ENCODE measurements at regions of chr22 and their contacts with region 1.

Region 1: GRCh38 chr22:32202539-32203180 is 2.2 kb downstream of the RFPL2 start:
- DNase-seq: peak; percentile 51
- H3K4me3 ChIP-seq: no peak overlapping the region
- H3K27ac ChIP-seq: no peak overlapping the region
- H3K4me1 ChIP-seq: no peaks in the 10 kb centered on the region
- H3K27me3 ChIP-seq: no peaks in the 10 kb centered on the region
- CTCF ChIP-seq: peak; percentile 57 to 75

Region 2: DNA sequence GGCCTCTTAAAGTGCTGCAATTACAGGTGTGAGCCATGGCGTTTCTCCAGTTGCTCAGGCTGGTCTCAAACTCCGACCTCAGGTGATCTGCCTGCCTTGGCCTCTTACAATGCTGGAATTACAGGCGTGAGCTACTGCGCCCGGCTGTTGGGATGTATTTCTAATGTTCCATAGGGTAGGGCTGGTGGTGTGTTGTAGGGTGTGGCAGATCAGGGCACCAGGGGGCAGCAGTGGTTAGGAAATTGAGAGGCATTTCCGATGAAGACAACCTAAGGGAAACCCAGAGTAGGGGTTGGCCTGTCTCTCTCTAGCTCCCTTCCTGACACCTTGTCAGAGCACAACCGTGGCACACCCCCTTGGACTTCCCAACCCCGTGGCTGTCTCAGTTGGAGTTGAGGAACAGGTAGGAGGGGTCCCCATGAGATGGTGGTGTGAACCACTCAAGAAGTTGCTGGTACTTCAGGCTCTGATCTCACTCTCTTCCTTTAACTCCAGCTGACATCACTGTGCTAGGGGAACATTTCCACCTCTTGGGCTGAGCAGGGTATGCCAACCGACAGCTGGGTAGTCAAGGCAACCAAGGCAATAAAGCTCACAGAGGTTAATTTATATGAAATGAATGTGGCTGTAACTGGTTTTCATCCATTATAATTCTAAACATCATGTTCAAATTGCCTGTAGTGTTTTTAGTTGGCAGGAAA is 225.4 kb before region 1 on chr22:
- CTCF ChIA-PET with region 1: no interaction called
- dilution Hi-C with region 1: no loop called
- in situ Hi-C with region 1: no loop called
- intact Hi-C with region 1: loop called (anchors 2 kb)
- DNase-seq: peak; percentile 72
- H3K4me3 ChIP-seq: no peak overlapping the region
- H3K27ac ChIP-seq: no peak overlapping the region
- H3K4me1 ChIP-seq: no peaks in the 10 kb centered on the region
- H3K27me3 ChIP-seq: no peaks in the 10 kb centered on the region
- CTCF ChIP-seq: peak; percentile 78 to 86

Region 3: GRCh38 chr22:32103658-32104315 is 98.9 kb before region 1 on chr22:
- CTCF ChIA-PET with region 1: no interaction called
- dilution Hi-C with region 1: no loop called
- in situ Hi-C with region 1: no loop called
- intact Hi-C with region 1: loop called (anchors 1 kb)
- DNase-seq: no peak
- H3K4me3 ChIP-seq: no peak overlapping the region
- H3K27ac ChIP-seq: no peak overlapping the region
- H3K4me1 ChIP-seq: no peaks in the 10 kb centered on the region
- H3K27me3 ChIP-seq: no peaks in the 10 kb centered on the region
- CTCF ChIP-seq: peak; percentile 32 to 52

Region 4: GRCh38 chr22:32158712-32159533 is 43.7 kb before region 1 on chr22 and contains the start of gene C22orf42:
- CTCF ChIA-PET with region 1: no interaction called
- dilution Hi-C with region 1: no loop called
- in situ Hi-C with region 1: no loop called
- intact Hi-C with region 1: no loop called
- DNase-seq: no peak
- H3K4me3 ChIP-seq: no peak within 1 kb of the TSS
- H3K27ac ChIP-seq: no peak within 1 kb of the TSS
- H3K4me1 ChIP-seq: no peaks in the 10 kb centered on the region
- H3K27me3 ChIP-seq: peaks cover 3% of the 10 kb centered on the region
- CTCF ChIP-seq: no peak
- total RNA-seq, gene C22orf42: not detected

Region 5: DNA sequence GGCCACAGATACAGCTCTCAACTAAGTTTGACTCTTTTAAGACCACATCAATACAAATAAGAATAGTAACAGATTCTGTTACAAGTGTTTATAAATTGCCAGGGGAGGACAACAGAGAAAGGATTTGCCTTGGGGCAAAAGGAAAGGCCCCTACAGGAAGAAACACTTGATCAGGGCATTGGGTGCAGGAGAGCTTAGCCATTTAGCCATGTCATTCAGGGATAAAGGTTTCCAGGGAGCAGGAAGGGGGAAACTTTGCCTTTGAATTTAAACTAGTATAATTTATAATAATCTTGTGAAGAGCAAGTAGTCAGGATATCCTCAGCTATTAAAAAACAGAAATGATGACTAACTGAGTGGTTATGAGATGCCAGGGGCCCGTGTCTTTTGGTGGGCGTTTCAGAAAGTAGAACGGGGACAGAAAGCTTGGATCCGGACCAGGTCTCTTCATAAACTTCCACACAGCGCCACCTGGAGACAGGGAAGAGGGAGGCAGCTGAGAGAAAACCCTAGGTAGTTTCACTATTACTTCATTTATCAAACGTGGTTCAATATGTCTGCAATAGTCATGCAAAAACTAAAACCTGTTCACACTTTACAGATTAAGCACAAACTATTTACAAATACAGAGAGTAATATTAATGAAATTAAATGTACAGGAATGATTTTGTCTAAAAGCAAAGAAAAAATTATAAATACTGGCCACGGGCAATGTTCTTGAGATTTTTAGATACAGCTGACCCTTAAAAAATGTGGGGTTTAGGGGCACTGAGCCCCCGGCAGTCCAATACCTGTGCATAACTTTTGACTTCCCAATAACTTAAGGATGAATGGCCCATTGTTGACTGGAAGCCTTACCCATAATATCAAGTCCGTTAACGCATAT is 63.5 kb after region 1 on chr22:
- CTCF ChIA-PET with region 1: interaction called, 3 read pairs
- dilution Hi-C with region 1: no loop called
- in situ Hi-C with region 1: no loop called
- intact Hi-C with region 1: loop called (anchors 1 kb)
- DNase-seq: peak; percentile 44
- H3K4me3 ChIP-seq: no peak overlapping the region
- H3K27ac ChIP-seq: no peak overlapping the region
- H3K4me1 ChIP-seq: no peaks in the 10 kb centered on the region
- H3K27me3 ChIP-seq: no peaks in the 10 kb centered on the region
- CTCF ChIP-seq: peak; percentile 90 to 92

Region 6: GRCh38 chr22:32354360-32355351 is 152.0 kb after region 1 on chr22:
- CTCF ChIA-PET with region 1: no interaction called
- dilution Hi-C with region 1: no loop called
- in situ Hi-C with region 1: no loop called
- intact Hi-C with region 1: loop called (anchors 1 kb)
- DNase-seq: peak; percentile 21
- H3K4me3 ChIP-seq: no peak overlapping the region
- H3K27ac ChIP-seq: no peak overlapping the region
- H3K4me1 ChIP-seq: no peaks in the 10 kb centered on the region
- H3K27me3 ChIP-seq: no peaks in the 10 kb centered on the region
- CTCF ChIP-seq: no peak

Region 7: DNA sequence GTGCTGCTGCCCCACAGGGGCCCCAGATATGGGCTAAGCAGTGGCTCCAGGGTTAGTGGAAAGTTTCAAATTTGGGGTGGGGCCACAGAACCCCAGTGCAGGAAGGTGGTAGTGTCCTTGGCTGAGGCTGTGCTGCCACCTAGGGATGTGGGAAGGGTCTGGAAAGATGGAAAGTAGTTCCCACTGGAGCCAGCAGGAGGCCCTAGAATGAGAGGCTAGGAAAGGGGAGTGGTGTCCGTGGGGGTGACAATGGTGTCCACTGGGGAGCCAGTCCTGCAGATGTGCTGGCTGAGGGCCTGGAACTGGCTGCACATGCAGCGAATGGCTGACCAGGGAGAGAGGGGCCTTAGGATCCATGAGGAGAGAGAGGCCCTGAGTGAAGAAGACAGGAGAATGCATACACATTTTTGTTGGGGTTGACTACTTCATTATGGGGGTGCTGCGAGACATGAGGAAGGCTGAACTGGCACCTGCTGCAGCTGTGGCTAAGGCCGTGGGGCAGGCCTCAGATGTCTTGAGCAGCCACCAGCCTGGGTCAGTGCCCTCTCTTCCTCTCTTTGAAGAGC is 176.1 kb after region 1 on chr22:
- CTCF ChIA-PET with region 1: no interaction called
- dilution Hi-C with region 1: no loop called
- in situ Hi-C with region 1: no loop called
- intact Hi-C with region 1: loop called (anchors 1 kb)
- DNase-seq: peak; percentile 31
- H3K4me3 ChIP-seq: no peak overlapping the region
- H3K27ac ChIP-seq: no peak overlapping the region
- H3K4me1 ChIP-seq: no peaks in the 10 kb centered on the region
- H3K27me3 ChIP-seq: no peaks in the 10 kb centered on the region
- CTCF ChIP-seq: peak; percentile 75 to 86

Region 8: GRCh38 chr22:32411829-32412592 is 209.4 kb after region 1 on chr22 and contains the start of gene RTCB:
- CTCF ChIA-PET with region 1: no interaction called
- dilution Hi-C with region 1: no loop called
- in situ Hi-C with region 1: no loop called
- intact Hi-C with region 1: no loop called
- DNase-seq: peak; percentile 91
- H3K4me3 ChIP-seq: peak within 1 kb of the TSS; percentile 83 to 94 (median 86)
- H3K27ac ChIP-seq: peak within 1 kb of the TSS; percentile 80
- H3K4me1 ChIP-seq: peaks cover 25% of the 10 kb centered on the region
- H3K27me3 ChIP-seq: no peaks in the 10 kb centered on the region
- CTCF ChIP-seq: no peak
- total RNA-seq, gene RTCB: 75.8 to 84.7 TPM

Region 9: GRCh38 chr22:32444068-32444467 is 241.4 kb after region 1 on chr22:
- CTCF ChIA-PET with region 1: interaction called, 32 read pairs
- dilution Hi-C with region 1: no loop called
- in situ Hi-C with region 1: no loop called
- intact Hi-C with region 1: loop called (anchors 1 kb)
- DNase-seq: peak; percentile 25
- H3K4me3 ChIP-seq: no peak overlapping the region
- H3K27ac ChIP-seq: no peak overlapping the region
- H3K4me1 ChIP-seq: no peaks in the 10 kb centered on the region
- H3K27me3 ChIP-seq: no peaks in the 10 kb centered on the region
- CTCF ChIP-seq: peak; percentile 36 to 70